Right ventricle myocardium superior (tissue), 1 donor: ENCODE measurements at regions of chr14 and their contacts with region 1.

Region 1: DNA sequence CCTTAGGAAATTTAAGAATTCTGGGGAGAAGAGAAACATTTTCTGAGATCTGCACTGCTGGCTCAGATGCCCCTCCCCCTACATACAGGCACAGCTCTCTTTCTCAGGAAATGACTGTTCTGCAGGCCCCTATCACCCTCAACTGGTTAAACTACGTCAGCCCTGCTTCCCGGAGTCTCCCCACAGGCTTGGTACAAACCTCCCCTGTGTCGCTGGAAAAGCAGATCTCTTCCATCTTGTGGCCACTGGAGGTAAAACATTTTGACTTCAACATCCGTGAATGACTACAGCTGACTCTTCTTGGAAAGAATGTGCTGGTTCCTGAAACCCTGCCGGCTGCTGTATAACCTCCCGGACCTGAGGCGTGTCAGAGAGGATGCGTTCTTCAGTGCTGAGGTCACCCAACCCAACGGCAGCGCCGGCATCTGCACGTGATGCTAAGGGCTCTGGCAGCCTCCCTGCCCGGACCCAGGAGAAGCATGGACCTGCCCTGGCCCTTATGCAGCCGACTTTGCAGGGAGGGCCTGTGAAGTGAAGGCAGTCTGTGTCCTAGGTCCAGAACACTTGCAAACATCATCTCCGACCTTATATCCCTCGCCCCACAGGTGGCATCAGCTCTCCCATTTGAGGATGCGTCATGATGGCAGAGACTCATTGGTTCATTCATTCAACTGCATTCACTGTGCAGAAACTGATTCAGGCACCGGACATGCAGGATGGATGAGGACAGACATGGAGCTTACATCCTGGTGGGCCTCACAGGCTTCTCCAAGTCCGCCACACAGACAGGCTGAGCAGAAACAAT is 129.3 kb downstream of the GCH1 start:
- DNase-seq: peak; percentile 83
- ATAC-seq: peak; percentile 75

Region 2: GRCh38 chr14:53306267-53306721 is 1467.1 kb before region 1 on chr14:
- intact Hi-C with region 1: no loop called
- DNase-seq: peak; percentile 65
- ATAC-seq: peak; percentile 95

Region 3: GRCh38 chr14:54698966-54699530 is 74.3 kb before region 1 on chr14:
- intact Hi-C with region 1: loop called (anchors 5 kb)
- DNase-seq: peak; percentile 75
- ATAC-seq: peak; percentile 90